ENCODE measurements at regions of chr6 and their contacts with region 1.

Region 1: GRCh38 chr6:137873273-137873762 is 6.3 kb downstream of the TNFAIP3 start:
- DNase-seq: peak; percentile 56
- H3K4me3 Mint-ChIP-seq: peak overlapping the region; percentile 87
- H3K27ac Mint-ChIP-seq: peak overlapping the region; percentile 86
- H3K4me1 Mint-ChIP-seq: peaks cover 80% of the 10 kb centered on the region
- H3K27me3 Mint-ChIP-seq: no peaks in the 10 kb centered on the region

Region 2: GRCh38 chr6:137697267-137697938 is 175.9 kb before region 1 on chr6:
- CTCF ChIA-PET with region 1: interaction called, 24 read pairs
- POLR2A ChIA-PET with region 1: interaction called, 9 read pairs
- DNase-seq: no peak
- H3K4me3 Mint-ChIP-seq: no peak overlapping the region
- H3K27ac Mint-ChIP-seq: peak overlapping the region; percentile 52
- H3K4me1 Mint-ChIP-seq: peaks cover 53% of the 10 kb centered on the region
- H3K27me3 Mint-ChIP-seq: no peaks in the 10 kb centered on the region

Region 3: GRCh38 chr6:137717074-137718073 is 155.9 kb before region 1 on chr6:
- CTCF ChIA-PET with region 1: interaction called, 20 read pairs
- POLR2A ChIA-PET with region 1: interaction called, 42 read pairs
- DNase-seq: peak; percentile 86
- H3K4me3 Mint-ChIP-seq: no peak overlapping the region
- H3K27ac Mint-ChIP-seq: peak overlapping the region; percentile 71
- H3K4me1 Mint-ChIP-seq: peaks cover 50% of the 10 kb centered on the region
- H3K27me3 Mint-ChIP-seq: no peaks in the 10 kb centered on the region

Region 4: GRCh38 chr6:137846772-137847313 is 26.5 kb before region 1 on chr6:
- CTCF ChIA-PET with region 1: no interaction called
- POLR2A ChIA-PET with region 1: no interaction called
- DNase-seq: no peak
- H3K4me3 Mint-ChIP-seq: no peak overlapping the region
- H3K27ac Mint-ChIP-seq: no peak overlapping the region
- H3K4me1 Mint-ChIP-seq: peaks cover 10% of the 10 kb centered on the region
- H3K27me3 Mint-ChIP-seq: no peaks in the 10 kb centered on the region

Region 5: GRCh38 chr6:137900815-137901214 is 27.5 kb after region 1 on chr6:
- CTCF ChIA-PET with region 1: interaction called, 11 read pairs
- POLR2A ChIA-PET with region 1: interaction called, 4 read pairs
- DNase-seq: no peak
- H3K4me3 Mint-ChIP-seq: no peak overlapping the region
- H3K27ac Mint-ChIP-seq: no peak overlapping the region
- H3K4me1 Mint-ChIP-seq: peaks cover 30% of the 10 kb centered on the region
- H3K27me3 Mint-ChIP-seq: no peaks in the 10 kb centered on the region

Region 6: GRCh38 chr6:137975188-137975940 is 102.0 kb after region 1 on chr6:
- CTCF ChIA-PET with region 1: interaction called, 31 read pairs
- POLR2A ChIA-PET with region 1: interaction called, 23 read pairs
- DNase-seq: peak; percentile 35
- H3K4me3 Mint-ChIP-seq: peak overlapping the region; percentile 66
- H3K27ac Mint-ChIP-seq: peak overlapping the region; percentile 91
- H3K4me1 Mint-ChIP-seq: peaks cover 53% of the 10 kb centered on the region
- H3K27me3 Mint-ChIP-seq: no peaks in the 10 kb centered on the region

Region 7: GRCh38 chr6:138082232-138082631 is 208.9 kb after region 1 on chr6:
- CTCF ChIA-PET with region 1: no interaction called
- POLR2A ChIA-PET with region 1: no interaction called
- DNase-seq: no peak
- H3K4me3 Mint-ChIP-seq: no peak overlapping the region
- H3K27ac Mint-ChIP-seq: no peak overlapping the region
- H3K4me1 Mint-ChIP-seq: no peaks in the 10 kb centered on the region
- H3K27me3 Mint-ChIP-seq: peaks cover 23% of the 10 kb centered on the region